ENCODE measurements at regions of chr1 and their contacts with region 1.

Region 1: DNA sequence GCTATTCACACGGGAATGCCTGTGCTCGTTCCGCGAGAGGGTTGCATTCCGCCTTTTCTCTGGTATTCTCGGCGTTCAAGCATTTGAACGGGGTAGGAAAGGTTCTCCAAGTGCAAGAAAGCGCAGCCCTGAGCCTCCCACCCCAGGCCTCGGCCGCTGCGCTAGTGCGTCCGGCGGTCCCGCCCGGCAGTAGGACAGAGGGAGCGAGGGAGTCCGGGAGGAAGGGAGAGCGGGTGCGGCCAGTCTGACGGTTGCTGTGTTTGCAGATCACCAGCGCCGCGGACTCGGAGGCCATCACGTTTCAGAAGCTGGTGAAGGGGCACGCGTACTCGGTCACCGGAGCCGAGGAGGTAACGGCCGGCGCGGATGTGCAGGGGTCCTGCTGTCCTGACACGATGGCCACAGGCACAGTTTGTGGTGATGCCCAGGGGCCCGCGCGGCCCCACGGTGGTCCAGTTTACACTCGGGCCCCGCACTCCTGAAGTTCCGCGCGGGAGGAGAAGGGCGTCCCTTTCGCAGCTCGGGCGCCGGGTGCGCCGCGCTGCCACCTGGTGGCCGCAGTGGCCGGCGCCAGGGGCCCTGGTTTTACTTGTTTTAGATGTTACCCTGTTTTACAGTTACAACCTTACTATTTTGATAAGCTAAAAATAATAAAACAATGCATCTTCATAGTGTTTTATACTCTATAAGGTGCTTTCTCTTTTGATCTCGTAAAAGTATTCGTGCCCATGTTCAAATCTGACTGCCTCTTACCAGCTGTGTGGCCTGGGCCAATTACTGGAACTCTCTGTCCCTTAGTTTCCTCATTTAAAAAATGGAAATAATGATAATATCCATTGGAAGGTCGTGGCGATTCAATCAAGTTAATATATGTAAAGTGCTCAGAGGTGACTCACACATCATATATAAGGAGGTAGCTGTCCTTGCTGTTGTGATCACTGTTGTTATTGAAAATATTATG is 36.7 kb downstream of the CAPN2 start:
- DNase-seq: peak; percentile 79 to 90
- ATAC-seq: peak; percentile 93
- H3K4me3 ChIP-seq: peak overlapping the region in 1 of 2 donors; percentile 21
- H3K27ac ChIP-seq: peak overlapping the region in 1 of 2 donors; percentile 43
- H3K4me1 ChIP-seq: no peaks in the 10 kb centered on the region
- H3K27me3 ChIP-seq: no peaks in the 10 kb centered on the region

Region 2: DNA sequence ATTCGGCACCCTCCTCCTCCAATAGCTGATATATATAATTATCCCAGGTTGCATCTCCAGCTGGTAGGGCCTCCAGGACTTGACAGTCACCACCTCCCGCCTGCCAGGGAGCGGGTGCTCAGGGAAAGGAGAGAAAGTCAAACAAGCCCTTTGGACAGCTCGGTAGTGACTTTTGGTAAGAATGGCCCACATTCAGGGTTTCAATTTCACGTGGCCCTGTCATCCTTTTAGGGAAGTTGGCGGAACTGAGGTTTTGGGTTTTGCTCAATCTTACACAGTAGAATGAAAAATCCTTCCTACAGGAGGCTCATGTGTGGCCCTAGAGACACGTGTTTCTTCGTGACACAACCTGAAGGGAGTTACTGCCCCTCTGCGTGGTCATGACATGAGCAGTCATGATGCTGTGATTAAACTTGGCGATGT is 127.7 kb before region 1 on chr1:
- intact Hi-C with region 1: no loop called
- DNase-seq: no peak
- ATAC-seq: no peak
- H3K4me3 ChIP-seq: no peak overlapping the region
- H3K27ac ChIP-seq: no peak overlapping the region
- H3K4me1 ChIP-seq: no peaks in the 10 kb centered on the region
- H3K27me3 ChIP-seq: peaks cover 0 to 1% of the 10 kb centered on the region in 2 donors

Region 3: DNA sequence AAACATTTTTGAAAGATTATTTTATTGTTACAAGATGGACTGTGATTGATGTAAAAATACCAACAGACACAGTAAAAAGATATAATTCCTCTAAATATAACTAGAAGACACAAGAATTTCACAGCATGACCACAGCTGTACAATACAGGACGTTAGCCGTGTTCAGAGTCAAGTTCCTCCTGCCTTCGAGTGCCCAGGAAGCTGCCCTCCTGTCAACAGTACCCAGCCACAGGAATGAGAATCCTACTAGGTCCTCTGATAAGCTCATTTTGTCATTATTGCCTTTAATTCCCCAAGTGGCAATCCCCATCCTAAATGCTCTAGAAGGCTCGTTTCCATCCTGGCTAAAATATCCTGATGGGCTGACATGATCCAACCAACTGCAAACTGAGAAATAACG is 53.1 kb before region 1 on chr1:
- intact Hi-C with region 1: loop called (anchors 2 kb)
- DNase-seq: no peak
- ATAC-seq: no peak
- H3K4me3 ChIP-seq: no peak overlapping the region
- H3K27ac ChIP-seq: no peak overlapping the region
- H3K4me1 ChIP-seq: peaks cover 3 to 7% of the 10 kb centered on the region in 2 donors
- H3K27me3 ChIP-seq: no peaks in the 10 kb centered on the region

Region 4: DNA sequence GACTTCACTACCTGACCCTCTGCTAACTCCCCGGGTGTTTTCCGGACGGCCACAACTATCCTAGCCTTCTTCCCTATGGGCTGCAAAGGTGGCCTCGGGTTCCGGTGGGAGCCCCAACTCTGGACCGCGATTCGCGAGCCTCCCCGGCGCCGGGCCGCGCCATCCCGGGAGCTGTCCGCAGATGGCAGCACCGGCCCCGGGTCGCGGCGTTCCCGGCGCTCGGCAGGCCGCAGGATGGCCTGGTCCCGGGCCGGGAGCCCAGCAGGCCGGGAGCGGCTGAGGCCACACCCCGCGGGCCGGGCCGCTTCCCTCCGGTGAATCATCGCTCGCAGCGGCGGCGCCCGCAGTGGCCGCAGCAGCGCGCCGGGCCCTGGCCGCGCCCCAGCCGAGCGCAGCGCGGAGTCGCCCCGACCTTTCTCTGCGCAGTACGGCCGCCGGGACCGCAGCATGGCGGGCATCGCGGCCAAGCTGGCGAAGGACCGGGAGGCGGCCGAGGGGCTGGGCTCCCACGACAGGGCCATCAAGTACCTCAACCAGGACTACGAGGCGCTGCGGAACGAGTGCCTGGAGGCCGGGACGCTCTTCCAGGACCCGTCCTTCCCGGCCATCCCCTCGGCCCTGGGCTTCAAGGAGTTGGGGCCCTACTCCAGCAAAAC is 36.7 kb before region 1 on chr1 and contains the start of gene CAPN2:
- intact Hi-C with region 1: loop called (anchors 1 to 2 kb)
- DNase-seq: peak; percentile 89 to 95
- ATAC-seq: peak; percentile 96
- H3K4me3 ChIP-seq: peak within 1 kb of the TSS; percentile 68 to 91
- H3K27ac ChIP-seq: peak within 1 kb of the TSS; percentile 83 to 94
- H3K4me1 ChIP-seq: no peaks in the 10 kb centered on the region
- H3K27me3 ChIP-seq: no peaks in the 10 kb centered on the region
- total RNA-seq, gene CAPN2: 208 to 213 TPM

Region 5: DNA sequence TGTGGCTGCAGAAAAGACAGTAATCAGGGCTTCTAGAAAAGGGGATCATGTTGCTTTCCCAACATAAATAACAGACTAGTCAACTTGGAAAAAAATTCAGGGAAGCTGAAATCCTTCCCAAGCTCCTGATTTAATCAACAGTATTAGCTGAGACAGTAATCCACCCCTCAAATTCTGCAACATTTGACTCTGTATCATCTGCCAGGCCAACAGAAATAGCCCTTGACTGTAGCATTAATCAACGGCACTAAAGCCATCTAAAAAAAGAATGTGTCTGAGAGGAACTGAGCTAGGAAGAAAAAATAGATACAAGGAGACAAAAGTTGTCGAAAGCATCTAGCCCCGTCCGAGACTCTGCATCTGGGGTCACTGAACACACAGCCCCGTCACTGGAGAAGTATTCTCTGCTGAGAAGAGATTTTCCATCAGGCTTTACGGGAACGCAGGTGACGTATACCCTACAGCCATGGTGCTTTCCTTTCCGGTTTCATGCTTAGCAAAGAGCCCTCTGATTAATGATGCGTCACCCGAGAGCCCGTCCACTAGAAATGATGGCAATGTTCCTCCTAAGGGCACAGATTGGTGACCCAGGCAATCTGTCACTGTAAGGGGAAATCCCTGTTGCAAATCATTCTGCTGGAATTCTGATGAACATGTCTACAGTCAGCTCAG is 138.8 kb after region 1 on chr1:
- intact Hi-C with region 1: no loop called
- DNase-seq: peak; percentile 73 to 83
- ATAC-seq: peak; percentile 68
- H3K4me3 ChIP-seq: no peak overlapping the region
- H3K27ac ChIP-seq: peak overlapping the region; percentile 65 to 74
- H3K4me1 ChIP-seq: no peaks in the 10 kb centered on the region
- H3K27me3 ChIP-seq: no peaks in the 10 kb centered on the region